Mammary epithelial cell (primary cell): ENCODE measurements at regions of chr17 and their contacts with region 1.

Region 1: DNA sequence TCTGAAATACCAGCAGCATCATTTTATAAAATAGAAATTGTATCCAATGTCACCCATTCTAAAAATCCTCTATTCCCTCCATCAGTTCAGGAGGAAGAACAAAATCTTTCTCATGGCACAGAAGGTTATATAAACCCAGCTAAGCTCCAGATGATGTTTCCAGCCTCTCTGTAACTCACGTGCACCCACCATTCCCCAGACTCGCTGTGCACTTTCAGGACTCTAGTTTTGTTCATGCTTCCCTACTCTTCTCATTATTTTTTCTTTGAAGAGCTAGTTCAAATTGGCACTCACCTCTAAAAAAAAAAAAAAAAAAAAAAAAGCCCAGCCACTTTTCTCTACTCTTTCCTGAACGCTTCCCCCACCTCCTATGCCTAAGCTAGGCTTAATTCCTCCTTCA is 36.0 kb upstream of the SHISA6 start:
- DNase-seq: no peak
- H3K4me3 ChIP-seq: no peak overlapping the region
- H3K27ac ChIP-seq: no peak overlapping the region
- H3K4me1 ChIP-seq: no peaks in the 10 kb centered on the region
- H3K27me3 ChIP-seq: no peaks in the 10 kb centered on the region
- CTCF ChIP-seq: no peak

Region 2: DNA sequence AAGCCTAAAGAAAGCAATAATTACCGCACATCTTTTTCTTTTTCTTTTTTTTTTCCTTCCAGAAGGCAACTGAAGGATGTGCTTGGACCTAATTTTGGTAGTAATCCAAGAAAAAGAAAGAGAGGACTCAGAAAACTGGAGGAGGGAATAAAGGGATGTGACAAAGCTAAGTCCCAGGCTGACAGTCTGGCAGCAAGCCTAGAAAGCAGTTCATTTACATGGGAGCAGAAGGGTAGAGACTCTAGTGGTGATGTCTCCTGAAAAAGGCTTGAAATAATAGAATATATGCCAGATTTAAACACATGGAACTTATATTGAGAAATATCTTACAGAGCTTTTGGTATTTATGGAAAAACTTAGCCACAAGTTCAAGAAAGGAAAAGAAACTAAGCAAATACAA is 64.9 kb before region 1 on chr17:
- CTCF ChIA-PET with region 1: no interaction called
- dilution Hi-C with region 1: no loop called
- in situ Hi-C with region 1: no loop called
- intact Hi-C with region 1: no loop called
- DNase-seq: no peak
- H3K4me3 ChIP-seq: no peak overlapping the region
- H3K27ac ChIP-seq: no peak overlapping the region
- H3K4me1 ChIP-seq: no peaks in the 10 kb centered on the region
- H3K27me3 ChIP-seq: no peaks in the 10 kb centered on the region
- CTCF ChIP-seq: no peak

Region 3: GRCh38 chr17:11245187-11245586 is 40.2 kb after region 1 on chr17:
- CTCF ChIA-PET with region 1: no interaction called
- dilution Hi-C with region 1: loop called (anchors 5 kb)
- in situ Hi-C with region 1: no loop called
- intact Hi-C with region 1: no loop called
- DNase-seq: no peak
- H3K4me3 ChIP-seq: no peak overlapping the region
- H3K27ac ChIP-seq: no peak overlapping the region
- H3K4me1 ChIP-seq: no peaks in the 10 kb centered on the region
- H3K27me3 ChIP-seq: peaks cover 4% of the 10 kb centered on the region
- CTCF ChIP-seq: no peak